Heart left ventricle (tissue), 16 donors: ENCODE measurements at regions of chr2 and their contacts with region 1.

Region 1: DNA sequence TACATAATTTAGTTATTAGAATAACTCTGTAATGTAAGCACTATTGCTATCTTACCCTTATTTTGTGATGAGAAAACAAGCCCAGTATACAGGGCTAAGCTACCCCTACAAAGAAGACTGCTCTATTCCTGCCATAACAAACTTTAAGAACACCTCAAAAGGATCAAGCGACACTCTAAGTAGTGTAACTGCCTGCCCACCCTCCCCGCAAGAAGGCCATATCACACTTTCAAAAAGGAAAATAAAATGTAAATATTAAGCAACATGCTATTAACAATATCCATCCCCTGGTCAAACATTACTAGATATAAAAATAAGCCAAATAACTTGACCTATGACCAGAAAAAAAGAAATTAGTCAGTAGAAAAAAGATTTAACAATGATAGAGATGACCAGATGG is 741.7 kb upstream of the CNTNAP5 start:
- DNase-seq: no peak
- ATAC-seq: no peak
- H3K4me3 ChIP-seq: no peak overlapping the region
- H3K27ac ChIP-seq: no peak overlapping the region
- H3K4me1 ChIP-seq: no peaks in the 10 kb centered on the region
- H3K27me3 ChIP-seq: no peaks in the 10 kb centered on the region
- CTCF ChIP-seq: no peak
- POLR2A ChIP-seq: no peak

Region 2: GRCh38 chr2:123245156-123245555 is 38.3 kb before region 1 on chr2:
- intact Hi-C with region 1: loop called in 1 of 10 experiments (anchors 5 kb)
- DNase-seq: no peak
- ATAC-seq: no peak
- H3K4me3 ChIP-seq: no peak overlapping the region
- H3K27ac ChIP-seq: no peak overlapping the region
- H3K4me1 ChIP-seq: no peaks in the 10 kb centered on the region
- H3K27me3 ChIP-seq: no peaks in the 10 kb centered on the region
- CTCF ChIP-seq: no peak
- POLR2A ChIP-seq: no peak